ENCODE measurements at regions of chr3 and their contacts with region 1.

Region 1: GRCh38 chr3:185253645-185254410 is at the start of gene EHHADH:
- DNase-seq: peak; percentile 52 to 76
- H3K4me3 ChIP-seq: peak within 1 kb of the TSS; percentile 60 to 80 (median 69)
- H3K27ac ChIP-seq: peak within 1 kb of the TSS; percentile 57 to 72
- H3K4me1 ChIP-seq: no peaks in the 10 kb centered on the region
- H3K27me3 ChIP-seq: no peaks in the 10 kb centered on the region
- CTCF ChIP-seq: peak in 1 of 3 donors; percentile 12
- POLR2A ChIP-seq: no peak
- total RNA-seq, gene EHHADH: 5.6 to 10.6 (median 6.7) TPM

Region 2: GRCh38 chr3:185272033-185272432 is 18.2 kb after region 1 on chr3:
- intact Hi-C with region 1: loop called (anchors 1 kb)
- DNase-seq: no peak
- H3K4me3 ChIP-seq: no peak overlapping the region
- H3K27ac ChIP-seq: no peak overlapping the region
- H3K4me1 ChIP-seq: no peaks in the 10 kb centered on the region
- H3K27me3 ChIP-seq: peaks cover 0 to 12% of the 10 kb centered on the region in 2 donors
- CTCF ChIP-seq: no peak
- POLR2A ChIP-seq: no peak

Region 3: DNA sequence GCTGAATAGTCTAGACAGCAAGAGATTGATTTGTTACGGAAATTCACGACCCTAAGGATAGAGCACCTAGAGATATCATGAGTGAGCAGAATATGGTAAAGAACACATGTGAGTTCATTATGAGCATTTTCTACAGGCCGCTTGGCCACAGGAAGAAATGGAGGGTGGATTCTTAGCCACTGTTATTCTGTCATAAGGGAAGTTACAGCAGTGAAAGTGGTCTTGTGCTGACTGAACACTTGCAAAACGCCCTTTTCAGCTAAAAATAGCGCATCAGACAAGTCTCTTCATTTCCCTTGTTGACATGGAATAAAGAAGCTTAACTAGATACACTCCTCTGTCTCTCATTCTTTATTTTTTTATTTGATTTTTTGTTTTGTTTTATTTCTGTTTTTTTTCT is 1088.4 kb after region 1 on chr3:
- intact Hi-C with region 1: no loop called
- DNase-seq: no peak
- H3K4me3 ChIP-seq: no peak overlapping the region
- H3K27ac ChIP-seq: no peak overlapping the region
- H3K4me1 ChIP-seq: no peaks in the 10 kb centered on the region
- H3K27me3 ChIP-seq: no peaks in the 10 kb centered on the region
- CTCF ChIP-seq: no peak
- POLR2A ChIP-seq: no peak